ENCODE measurements at regions of chr10 and their contacts with region 1.

Region 1: DNA sequence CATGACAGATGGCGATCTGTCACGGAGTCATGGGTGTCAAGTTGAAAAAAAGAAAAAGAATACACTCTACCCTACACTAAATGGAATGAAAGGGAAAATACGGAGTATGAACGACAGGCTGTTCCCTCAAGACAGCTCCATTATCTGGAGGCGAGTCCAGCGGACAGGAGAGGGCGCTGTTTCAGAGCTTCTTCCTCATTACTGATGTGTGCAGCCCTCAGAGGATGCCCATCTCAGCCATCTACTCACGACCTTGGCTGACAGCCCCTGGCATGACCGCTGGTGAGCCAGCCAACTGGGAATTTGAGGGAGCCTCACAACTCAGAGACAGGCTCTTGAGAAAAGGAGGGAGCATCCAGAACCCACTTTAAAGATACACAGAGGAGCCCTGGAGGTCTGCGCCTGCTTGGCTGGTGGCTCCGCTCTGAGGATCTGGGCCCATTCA is 49.6 kb upstream of the SMNDC1 start:
- DNase-seq: peak; percentile 89
- H3K4me3 ChIP-seq: peak overlapping the region; percentile 60
- H3K27ac ChIP-seq: peak overlapping the region; percentile 93
- H3K4me1 ChIP-seq: peaks cover 61% of the 10 kb centered on the region
- CTCF ChIP-seq: peak; percentile 98

Region 2: DNA sequence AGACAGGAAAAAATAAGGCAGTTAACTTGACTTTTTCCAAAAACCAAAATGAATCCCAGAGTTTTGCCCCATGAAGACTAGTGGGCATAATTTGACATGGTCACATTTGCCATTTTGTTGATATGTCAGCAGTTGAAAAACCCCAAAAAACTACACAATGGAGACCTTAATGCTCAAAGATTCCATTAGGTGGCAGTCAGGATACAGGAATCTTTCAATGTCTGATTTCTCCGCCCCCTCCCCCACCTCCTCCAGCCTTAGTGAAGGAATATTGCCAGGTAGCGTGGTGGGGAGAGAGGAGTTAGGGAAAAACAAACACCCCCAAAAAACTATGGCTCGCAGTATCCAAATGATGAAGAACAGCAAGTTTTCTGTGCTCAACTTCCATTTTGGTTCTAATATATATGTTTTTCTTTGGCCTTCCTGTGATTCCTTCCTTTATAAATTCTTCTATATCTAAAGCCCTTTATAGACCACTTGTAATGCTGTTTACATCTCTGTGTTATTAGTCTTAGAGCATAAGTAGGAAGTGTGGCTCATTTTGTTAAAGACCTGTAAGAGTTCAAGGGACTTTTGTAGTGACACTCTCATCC is 42.9 kb before region 1 on chr10:
- CTCF ChIA-PET with region 1: interaction called, 3 read pairs
- POLR2A ChIA-PET with region 1: interaction called, 8 read pairs
- intact Hi-C with region 1: loop called (anchors 2 kb)
- DNase-seq: peak; percentile 77
- H3K4me3 ChIP-seq: no peak overlapping the region
- H3K27ac ChIP-seq: no peak overlapping the region
- H3K4me1 ChIP-seq: peaks cover 36% of the 10 kb centered on the region
- CTCF ChIP-seq: peak; percentile 93

Region 3: DNA sequence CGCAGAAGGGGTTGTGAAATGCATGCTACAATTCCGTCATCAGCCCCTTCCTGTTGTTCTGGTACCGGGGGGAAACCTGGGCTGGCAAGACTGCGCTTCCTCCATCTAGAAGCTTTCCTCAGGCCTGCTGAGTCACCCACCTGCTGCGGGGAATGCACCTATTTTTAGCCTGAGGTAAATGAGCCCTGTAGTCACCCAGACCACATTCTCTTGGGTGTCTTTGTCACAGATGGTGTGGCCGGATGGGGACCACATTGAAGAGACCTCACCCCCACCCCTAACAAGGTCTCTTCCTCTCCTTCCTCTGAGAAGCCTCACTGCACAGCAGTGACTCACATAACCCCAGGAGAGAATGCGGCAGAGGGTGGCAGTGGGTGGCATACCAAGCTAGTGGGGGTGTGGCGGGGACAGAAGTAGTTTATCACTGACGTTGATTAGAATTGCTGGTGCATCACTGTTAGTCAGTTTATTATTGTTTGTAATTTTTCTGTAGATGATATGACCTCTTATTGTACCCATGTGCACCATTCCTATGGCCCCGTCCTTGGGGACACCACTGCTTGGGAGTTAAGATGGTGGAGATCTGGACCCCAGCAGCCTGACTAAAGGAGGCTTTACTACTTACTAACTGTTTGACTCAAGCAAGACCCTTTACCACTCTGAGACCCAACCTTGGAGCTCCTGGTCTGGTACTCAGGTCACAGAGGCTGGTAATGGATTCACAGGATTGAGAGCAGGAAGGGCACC is 60.4 kb after region 1 on chr10:
- CTCF ChIA-PET with region 1: interaction called, 15 read pairs
- POLR2A ChIA-PET with region 1: interaction called, 13 read pairs
- intact Hi-C with region 1: loop called (anchors 1 kb)
- DNase-seq: peak; percentile 96
- H3K4me3 ChIP-seq: peak overlapping the region; percentile 47
- H3K27ac ChIP-seq: peak overlapping the region; percentile 85
- H3K4me1 ChIP-seq: peaks cover 76% of the 10 kb centered on the region
- CTCF ChIP-seq: no peak

Region 4: GRCh38 chr10:110460111-110460809 is 105.9 kb after region 1 on chr10:
- CTCF ChIA-PET with region 1: interaction called, 5 read pairs
- POLR2A ChIA-PET with region 1: interaction called, 25 read pairs
- intact Hi-C with region 1: loop called (anchors 1 kb)
- DNase-seq: peak; percentile 92
- H3K4me3 ChIP-seq: peak overlapping the region; percentile 50
- H3K27ac ChIP-seq: peak overlapping the region; percentile 65
- H3K4me1 ChIP-seq: peaks cover 100% of the 10 kb centered on the region
- CTCF ChIP-seq: no peak

Region 5: DNA sequence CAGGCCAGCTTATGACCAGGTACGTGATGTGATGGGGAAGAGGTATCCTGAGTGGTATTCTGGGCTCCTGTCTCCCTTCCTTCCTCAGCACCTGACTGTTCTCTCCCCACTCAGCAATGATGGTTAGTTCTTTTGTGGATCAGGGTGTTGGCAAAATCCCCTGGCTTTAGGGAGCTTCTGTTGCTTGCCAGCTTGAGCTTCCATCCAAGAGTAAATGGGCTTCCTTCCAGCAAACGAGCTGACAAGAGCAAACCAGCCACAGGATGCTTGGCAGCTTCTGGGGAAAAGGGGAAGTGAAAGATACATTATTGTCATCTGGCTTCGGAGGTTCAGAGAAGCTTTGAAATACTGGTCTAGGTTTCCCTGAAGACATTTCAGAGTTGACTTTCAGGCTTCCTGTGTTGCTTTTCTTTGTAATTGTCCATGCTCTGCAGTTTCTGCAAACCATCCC is 148.5 kb after region 1 on chr10:
- CTCF ChIA-PET with region 1: interaction called, 5 read pairs
- POLR2A ChIA-PET with region 1: interaction called, 4 read pairs
- intact Hi-C with region 1: loop called (anchors 1 kb)
- DNase-seq: peak; percentile 92
- H3K4me3 ChIP-seq: peak overlapping the region; percentile 20
- H3K27ac ChIP-seq: peak overlapping the region; percentile 36
- H3K4me1 ChIP-seq: peaks cover 49% of the 10 kb centered on the region
- CTCF ChIP-seq: no peak

Region 6: DNA sequence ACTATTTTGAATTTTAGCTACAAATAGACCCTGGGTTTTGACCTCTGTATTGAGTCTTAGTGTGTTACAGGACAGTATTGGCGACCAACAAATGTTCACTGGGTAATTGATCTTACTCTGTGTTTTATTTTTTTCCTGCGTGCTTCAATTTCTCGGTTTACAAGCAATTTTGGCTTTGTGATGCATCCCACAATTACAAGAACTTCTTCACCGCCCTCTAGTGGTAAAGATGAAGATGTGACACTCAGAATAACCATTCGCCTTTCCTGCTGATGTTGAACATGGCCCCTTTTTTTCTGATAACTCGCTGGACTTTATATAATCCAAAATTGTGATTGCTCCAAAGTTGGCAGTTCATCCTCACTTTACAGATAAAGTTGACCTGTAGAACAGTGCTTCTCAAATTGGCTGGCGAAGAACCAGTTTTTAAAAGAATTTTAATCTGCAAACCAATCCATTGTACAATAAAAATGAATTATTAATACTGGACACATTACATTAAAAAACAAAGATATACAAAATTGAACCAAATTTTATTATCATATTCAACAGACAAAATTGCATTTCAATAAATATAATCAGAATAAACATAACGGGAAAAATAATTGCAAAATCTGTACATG is 192.9 kb after region 1 on chr10:
- CTCF ChIA-PET with region 1: interaction called, 24 read pairs
- POLR2A ChIA-PET with region 1: interaction called, 18 read pairs
- intact Hi-C with region 1: loop called (anchors 1 kb)
- DNase-seq: peak; percentile 86
- H3K4me3 ChIP-seq: no peak overlapping the region
- H3K27ac ChIP-seq: no peak overlapping the region
- H3K4me1 ChIP-seq: peaks cover 15% of the 10 kb centered on the region
- CTCF ChIP-seq: peak; percentile 98

Measured in OCI-LY7 (cell line).